ENCODE measurements at regions of chr19 and their contacts with region 1.

Region 1: DNA sequence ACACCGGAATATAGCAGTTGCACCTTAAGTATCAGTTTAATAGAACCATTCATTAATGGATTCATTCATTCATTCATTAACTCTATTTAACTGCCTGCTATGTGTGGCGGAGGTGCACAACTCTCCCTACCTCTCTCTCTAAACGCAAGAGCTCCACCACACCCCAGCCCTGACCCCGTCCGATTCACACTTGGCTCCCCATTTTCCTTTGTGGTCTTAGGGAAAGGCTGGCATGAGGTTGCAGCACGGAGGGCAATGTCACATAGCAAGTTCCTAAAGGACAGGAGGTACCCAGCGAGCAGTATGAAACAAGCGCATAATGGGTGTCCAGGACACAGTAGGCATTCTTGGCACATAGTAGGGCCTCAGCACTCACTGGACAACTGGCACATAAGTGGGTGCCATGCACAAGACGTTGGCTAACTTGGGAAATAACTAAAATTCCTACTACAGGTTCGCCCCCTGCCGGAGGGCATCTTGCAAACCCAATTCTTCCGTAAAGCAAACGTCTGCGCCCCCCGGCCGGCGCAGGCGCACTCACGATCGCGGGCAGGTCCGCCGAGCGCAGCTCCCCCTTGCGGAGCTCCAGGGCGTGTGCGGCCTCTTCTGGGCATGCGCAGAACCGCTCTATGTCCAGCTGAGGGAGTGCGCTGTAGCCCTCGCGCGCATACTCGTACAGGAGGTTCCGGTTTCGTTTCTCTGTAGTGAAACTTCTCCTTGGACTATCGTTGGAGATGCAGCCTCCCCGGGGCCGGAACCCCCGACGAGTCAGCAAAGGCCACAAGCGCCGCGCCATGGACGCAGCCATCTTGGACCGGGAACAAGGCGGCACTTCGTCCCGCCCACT is at the start of gene SARS2:
- DNase-seq: peak; percentile 83 to 98 (median 92)
- ATAC-seq: peak; percentile 74
- H3K4me3 ChIP-seq: peak within 1 kb of the TSS; percentile 81 to 85
- H3K4me3 Mint-ChIP-seq: peak within 1 kb of the TSS; percentile 97
- H3K27ac ChIP-seq: peak within 1 kb of the TSS; percentile 85 to 87
- H3K27ac Mint-ChIP-seq: peak within 1 kb of the TSS; percentile 100
- H3K4me1 ChIP-seq: peaks cover 22% of the 10 kb centered on the region
- H3K4me1 Mint-ChIP-seq: peaks cover 39% of the 10 kb centered on the region
- H3K27me3 ChIP-seq: no peaks in the 10 kb centered on the region
- H3K27me3 Mint-ChIP-seq: no peaks in the 10 kb centered on the region
- CTCF ChIP-seq: peak; percentile 100
- total RNA-seq, gene SARS2: 24.3 to 26.1 TPM

Region 2: GRCh38 chr19:38335949-38336637 is 594.1 kb before region 1 on chr19:
- CTCF ChIA-PET with region 1: no interaction called
- POLR2A ChIA-PET with region 1: no interaction called
- intact Hi-C with region 1: loop called in 1 of 2 experiments (anchors 1 kb)
- DNase-seq: peak; percentile 85 to 96 (median 95)
- ATAC-seq: peak; percentile 66
- H3K4me3 ChIP-seq: peak overlapping the region; percentile 85 to 94
- H3K4me3 Mint-ChIP-seq: peak overlapping the region; percentile 89
- H3K27ac ChIP-seq: peak overlapping the region; percentile 84 to 95
- H3K27ac Mint-ChIP-seq: peak overlapping the region; percentile 97
- H3K4me1 ChIP-seq: peaks cover 10% of the 10 kb centered on the region
- H3K4me1 Mint-ChIP-seq: peaks cover 17% of the 10 kb centered on the region
- H3K27me3 ChIP-seq: no peaks in the 10 kb centered on the region
- H3K27me3 Mint-ChIP-seq: no peaks in the 10 kb centered on the region
- CTCF ChIP-seq: no peak

Region 3: GRCh38 chr19:38514812-38515633 is 415.1 kb before region 1 on chr19:
- CTCF ChIA-PET with region 1: interaction called, 5 read pairs
- POLR2A ChIA-PET with region 1: no interaction called
- intact Hi-C with region 1: loop called in 1 of 2 experiments (anchors 1 kb)
- DNase-seq: peak; percentile 53 to 89 (median 73)
- ATAC-seq: peak; percentile 99
- H3K4me3 ChIP-seq: no peak overlapping the region
- H3K4me3 Mint-ChIP-seq: no peak overlapping the region
- H3K27ac ChIP-seq: no peak overlapping the region
- H3K27ac Mint-ChIP-seq: no peak overlapping the region
- H3K4me1 ChIP-seq: peaks cover 9% of the 10 kb centered on the region
- H3K4me1 Mint-ChIP-seq: peaks cover 7% of the 10 kb centered on the region
- H3K27me3 ChIP-seq: peaks cover 0 to 4% of the 10 kb centered on the region in 2 experiments
- H3K27me3 Mint-ChIP-seq: peaks cover 2% of the 10 kb centered on the region
- CTCF ChIP-seq: peak; percentile 92

Region 4: DNA sequence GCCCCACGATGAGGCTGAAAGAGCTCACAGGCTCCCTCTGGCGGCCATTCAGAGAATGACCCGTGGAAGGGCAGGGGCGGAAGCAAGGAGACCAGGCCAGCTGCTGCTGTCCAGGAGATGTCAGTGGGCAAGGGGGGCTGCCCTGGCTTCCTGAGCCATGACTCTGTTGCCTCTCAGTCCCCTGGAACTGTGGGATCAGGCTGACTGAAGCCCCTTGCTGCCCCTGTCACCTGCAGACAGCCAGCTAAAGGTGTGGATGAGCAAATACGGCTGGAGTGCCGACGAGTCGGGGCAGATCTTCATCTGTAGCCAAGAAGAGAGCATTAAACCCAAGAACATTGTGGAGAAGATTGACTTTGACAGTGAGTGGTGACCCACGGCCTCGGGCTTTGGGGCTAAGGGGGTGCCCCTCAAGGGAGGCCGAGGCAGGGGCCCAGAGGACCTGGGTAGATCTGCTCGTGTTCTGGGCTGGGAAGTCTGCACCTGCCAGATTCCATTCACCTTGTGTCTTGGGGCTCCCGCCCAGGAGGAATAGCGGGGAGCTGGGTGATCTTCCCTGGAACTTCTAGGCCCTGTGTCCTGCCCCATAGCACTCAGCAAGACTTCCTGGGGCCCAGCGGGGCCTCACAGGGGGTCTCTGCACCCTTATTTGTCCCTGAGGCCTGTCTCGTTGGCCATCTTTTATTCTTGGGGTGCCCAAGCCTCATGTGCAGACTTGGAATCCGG is 295.2 kb before region 1 on chr19:
- CTCF ChIA-PET with region 1: interaction called, 5 read pairs
- POLR2A ChIA-PET with region 1: no interaction called
- intact Hi-C with region 1: loop called in 1 of 2 experiments (anchors 2 kb)
- DNase-seq: peak; percentile 49 to 84 (median 73)
- ATAC-seq: peak; percentile 30
- H3K4me3 ChIP-seq: no peak overlapping the region
- H3K4me3 Mint-ChIP-seq: peak overlapping the region; percentile 47
- H3K27ac ChIP-seq: peak overlapping the region in 1 of 2 experiments; percentile 63
- H3K27ac Mint-ChIP-seq: peak overlapping the region; percentile 46
- H3K4me1 ChIP-seq: peaks cover 26% of the 10 kb centered on the region
- H3K4me1 Mint-ChIP-seq: peaks cover 24% of the 10 kb centered on the region
- H3K27me3 ChIP-seq: no peaks in the 10 kb centered on the region
- H3K27me3 Mint-ChIP-seq: no peaks in the 10 kb centered on the region
- CTCF ChIP-seq: peak; percentile 88

Region 5: GRCh38 chr19:38693380-38694223 is 236.6 kb before region 1 on chr19:
- CTCF ChIA-PET with region 1: no interaction called
- POLR2A ChIA-PET with region 1: no interaction called
- intact Hi-C with region 1: no loop called
- DNase-seq: peak in 8 of 9 experiments; percentile 22 to 84 (median 58)
- ATAC-seq: peak; percentile 74
- H3K4me3 ChIP-seq: peak overlapping the region; percentile 16 to 19
- H3K4me3 Mint-ChIP-seq: peak overlapping the region; percentile 46
- H3K27ac ChIP-seq: peak overlapping the region; percentile 37 to 72
- H3K27ac Mint-ChIP-seq: peak overlapping the region; percentile 79
- H3K4me1 ChIP-seq: peaks cover 33% of the 10 kb centered on the region
- H3K4me1 Mint-ChIP-seq: peaks cover 54% of the 10 kb centered on the region
- H3K27me3 ChIP-seq: no peaks in the 10 kb centered on the region
- H3K27me3 Mint-ChIP-seq: no peaks in the 10 kb centered on the region
- CTCF ChIP-seq: no peak

Region 6: DNA sequence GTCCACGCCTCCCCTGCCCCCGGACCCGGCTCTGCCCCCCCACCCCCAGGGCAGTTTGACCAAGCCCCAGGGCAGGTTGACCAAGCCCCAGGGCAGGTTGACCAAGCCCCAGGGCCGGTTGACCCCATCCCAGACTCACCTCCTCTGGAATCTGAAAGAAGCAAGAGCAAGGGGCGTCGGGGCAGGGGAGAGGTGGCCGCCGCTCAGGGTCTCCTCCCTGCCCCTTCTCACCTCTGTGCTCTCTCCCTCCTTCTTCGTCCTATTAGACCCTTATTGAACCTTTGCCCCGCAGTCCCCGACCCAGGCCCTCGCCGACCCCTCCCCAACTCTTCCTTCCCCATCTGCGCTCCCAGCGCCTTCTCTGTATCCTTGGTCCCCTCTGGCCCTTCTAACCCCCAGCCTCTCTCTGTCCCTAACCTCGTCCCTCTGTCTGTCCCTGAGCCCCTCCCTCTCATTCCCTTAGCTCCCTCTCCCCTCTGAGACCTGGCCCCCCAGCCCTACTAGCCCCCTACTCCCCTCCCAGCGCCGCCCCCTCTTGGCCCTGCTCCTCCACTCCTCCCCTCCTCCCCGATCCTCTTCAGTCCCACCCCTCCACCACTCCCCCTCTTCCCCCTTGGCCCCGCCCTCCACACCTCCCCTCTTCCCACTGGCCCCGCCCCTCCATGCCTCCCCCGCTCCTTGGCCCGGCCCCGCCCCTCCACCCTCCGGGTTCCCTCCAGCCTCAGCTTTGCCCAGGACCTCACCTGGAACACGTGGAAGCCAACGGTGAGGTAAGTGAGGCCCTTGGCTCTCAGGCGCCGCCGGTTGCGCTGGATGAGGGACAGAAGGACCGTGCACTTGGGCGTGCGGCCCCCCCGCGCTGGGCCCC is 193.5 kb before region 1 on chr19:
- CTCF ChIA-PET with region 1: interaction called, 11 read pairs
- POLR2A ChIA-PET with region 1: interaction called, 3 read pairs
- intact Hi-C with region 1: loop called in 1 of 2 experiments (anchors 1 kb)
- DNase-seq: peak; percentile 27 to 78 (median 67)
- ATAC-seq: peak; percentile 27
- H3K4me3 ChIP-seq: peak overlapping the region; percentile 29 to 41
- H3K4me3 Mint-ChIP-seq: peak overlapping the region; percentile 66
- H3K27ac ChIP-seq: no peak overlapping the region
- H3K27ac Mint-ChIP-seq: no peak overlapping the region
- H3K4me1 ChIP-seq: peaks cover 45% of the 10 kb centered on the region
- H3K4me1 Mint-ChIP-seq: peaks cover 40% of the 10 kb centered on the region
- H3K27me3 ChIP-seq: no peaks in the 10 kb centered on the region
- H3K27me3 Mint-ChIP-seq: no peaks in the 10 kb centered on the region
- CTCF ChIP-seq: no peak

Region 7: DNA sequence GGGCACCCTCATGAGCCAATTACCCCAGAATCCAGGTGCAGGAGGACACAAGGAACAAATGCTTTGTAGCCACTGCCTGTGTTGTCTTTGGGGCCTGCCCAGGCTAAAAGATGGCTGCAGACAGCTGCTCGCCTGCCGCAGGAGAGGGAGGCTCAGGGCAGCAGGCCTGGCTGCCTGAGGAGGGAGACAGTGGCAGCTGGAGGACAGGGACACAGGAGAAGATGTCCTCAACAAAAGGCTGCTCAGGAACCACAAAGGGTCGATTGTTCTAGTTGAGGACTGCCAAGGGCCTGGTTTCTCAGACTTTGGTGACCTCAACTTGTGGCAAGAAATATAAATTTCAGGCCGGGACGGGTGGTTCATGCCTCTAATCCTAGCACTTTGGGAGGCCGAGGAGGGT is 38.4 kb before region 1 on chr19:
- CTCF ChIA-PET with region 1: interaction called, 12 read pairs
- POLR2A ChIA-PET with region 1: no interaction called
- intact Hi-C with region 1: no loop called
- DNase-seq: no peak
- ATAC-seq: no peak
- H3K4me3 ChIP-seq: no peak overlapping the region
- H3K4me3 Mint-ChIP-seq: no peak overlapping the region
- H3K27ac ChIP-seq: no peak overlapping the region
- H3K27ac Mint-ChIP-seq: no peak overlapping the region
- H3K4me1 ChIP-seq: peaks cover 3% of the 10 kb centered on the region
- H3K4me1 Mint-ChIP-seq: peaks cover 9% of the 10 kb centered on the region
- H3K27me3 ChIP-seq: no peaks in the 10 kb centered on the region
- H3K27me3 Mint-ChIP-seq: no peaks in the 10 kb centered on the region
- CTCF ChIP-seq: no peak

Region 8: DNA sequence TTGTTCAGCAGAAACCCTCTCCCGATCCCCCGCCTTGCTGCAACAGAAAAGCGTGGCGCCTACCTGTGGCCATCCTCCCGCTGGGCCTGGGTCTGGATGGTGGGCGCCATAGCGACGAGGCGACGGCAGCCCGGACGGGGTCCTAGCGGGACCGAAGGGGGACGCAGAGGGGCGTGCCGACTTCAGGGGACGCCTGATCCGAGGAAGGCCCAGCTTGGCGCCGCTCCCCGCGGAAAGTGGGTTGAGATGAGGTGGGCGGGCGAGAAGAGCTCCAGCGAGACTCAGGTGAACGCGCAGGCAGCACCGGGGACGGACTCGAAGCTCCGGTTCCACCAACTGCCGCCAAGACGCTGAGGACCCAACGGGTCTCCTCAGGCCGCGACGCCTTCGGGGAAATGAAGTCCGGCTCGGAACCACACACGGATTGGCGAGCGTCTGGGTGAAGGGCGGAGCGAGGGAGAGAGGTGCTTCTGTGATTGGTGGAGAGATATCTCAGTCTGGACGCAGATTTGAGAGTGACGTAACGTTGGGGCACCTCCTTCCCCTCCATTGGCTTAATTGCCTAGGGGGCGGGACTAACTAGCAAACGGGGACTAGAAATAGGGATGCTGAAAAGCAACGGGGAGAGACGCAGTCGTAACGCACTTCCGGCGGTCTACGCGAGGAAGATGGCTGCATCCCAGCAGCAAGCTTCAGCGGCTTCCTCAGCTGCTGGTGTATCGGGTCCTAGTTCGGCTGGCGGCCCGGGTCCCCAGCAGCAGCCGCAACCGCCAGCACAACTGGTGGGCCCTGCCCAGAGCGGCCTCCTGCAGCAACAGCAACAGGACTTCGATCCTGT is 460.8 kb after region 1 on chr19 and contains the starts of genes MED29 and PAF1:
- CTCF ChIA-PET with region 1: no interaction called
- POLR2A ChIA-PET with region 1: no interaction called
- intact Hi-C with region 1: loop called in 1 of 2 experiments (anchors 1 kb)
- DNase-seq: peak; percentile 89 to 100 (median 94)
- ATAC-seq: peak; percentile 87
- H3K4me3 ChIP-seq: peak within 1 kb of the TSS; percentile 86 to 95
- H3K4me3 Mint-ChIP-seq: peak within 1 kb of the TSS; percentile 96
- H3K27ac ChIP-seq: peak within 1 kb of the TSS; percentile 99
- H3K27ac Mint-ChIP-seq: peak within 1 kb of the TSS; percentile 100
- H3K4me1 ChIP-seq: peaks cover 19% of the 10 kb centered on the region
- H3K4me1 Mint-ChIP-seq: peaks cover 37% of the 10 kb centered on the region
- H3K27me3 ChIP-seq: no peaks in the 10 kb centered on the region
- H3K27me3 Mint-ChIP-seq: no peaks in the 10 kb centered on the region
- CTCF ChIP-seq: no peak
- total RNA-seq, gene MED29: 45.9 to 55.1 TPM
- total RNA-seq, gene PAF1: 109 to 117 TPM